IMR-90 (cell line): ENCODE measurements at regions of chr2 and their contacts with region 1.

Region 1: GRCh38 chr2:237256887-237257286 is 157.1 kb downstream of the COL6A3 start:
- DNase-seq: peak; percentile 86
- ATAC-seq: peak; percentile 48
- H3K4me3 ChIP-seq: no peak overlapping the region
- H3K27ac ChIP-seq: peak overlapping the region; percentile 95
- H3K4me1 ChIP-seq: peaks cover 43% of the 10 kb centered on the region
- H3K27me3 ChIP-seq: no peaks in the 10 kb centered on the region
- CTCF ChIP-seq: no peak
- POLR2A ChIP-seq: 0 out of 2 replicates have a peak, but pooled peaks have one; percentile 21
- RAD21 ChIP-seq: no peak

Region 2: DNA sequence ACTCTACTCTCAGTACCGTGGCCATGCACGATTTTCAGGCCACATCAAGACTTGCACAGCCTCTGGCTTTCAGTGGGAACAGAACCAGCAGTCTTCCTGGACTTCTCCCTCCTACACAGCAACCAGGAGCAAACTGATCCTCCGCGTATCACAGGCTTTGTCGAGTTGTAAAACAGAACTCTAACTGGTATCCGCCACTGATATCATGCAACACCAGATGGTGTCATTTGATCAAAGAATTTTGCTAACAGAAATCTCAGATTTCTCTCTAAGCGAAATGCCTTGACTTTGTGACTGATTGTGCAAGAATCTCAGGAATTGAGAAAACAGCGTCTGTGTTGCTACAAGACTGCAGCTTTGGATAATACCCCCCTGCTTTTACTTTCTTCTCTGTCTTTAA is 85.5 kb before region 1 on chr2:
- CTCF ChIA-PET with region 1: no interaction called
- POLR2A ChIA-PET with region 1: interaction called, 6 read pairs
- dilution Hi-C with region 1: no loop called
- in situ Hi-C with region 1: no loop called
- intact Hi-C with region 1: loop called (anchors 2 kb)
- DNase-seq: peak; percentile 97
- ATAC-seq: peak; percentile 92
- H3K4me3 ChIP-seq: peak overlapping the region; percentile 21; the same call in 1 of the 2 replicates
- H3K27ac ChIP-seq: peak overlapping the region; percentile 97
- H3K4me1 ChIP-seq: peaks cover 11% of the 10 kb centered on the region
- H3K27me3 ChIP-seq: no peaks in the 10 kb centered on the region
- CTCF ChIP-seq: peak; percentile 56
- POLR2A ChIP-seq: peak; percentile 42; the same call in 1 of the 2 replicates
- RAD21 ChIP-seq: peak; percentile 80

Region 3: GRCh38 chr2:237181844-237182243 is 75.0 kb before region 1 on chr2:
- CTCF ChIA-PET with region 1: interaction called, 4 read pairs
- POLR2A ChIA-PET with region 1: interaction called, 3 read pairs
- dilution Hi-C with region 1: no loop called
- in situ Hi-C with region 1: no loop called
- intact Hi-C with region 1: loop called (anchors 2 kb)
- DNase-seq: peak; percentile 100
- ATAC-seq: peak; percentile 43
- H3K4me3 ChIP-seq: no peak overlapping the region
- H3K27ac ChIP-seq: peak overlapping the region; percentile 93
- H3K4me1 ChIP-seq: peaks cover 42% of the 10 kb centered on the region
- H3K27me3 ChIP-seq: no peaks in the 10 kb centered on the region
- CTCF ChIP-seq: no peak
- POLR2A ChIP-seq: no peak
- RAD21 ChIP-seq: no peak; the same call in 1 of the 2 replicates

Region 4: GRCh38 chr2:237207646-237208045 is 49.2 kb before region 1 on chr2:
- CTCF ChIA-PET with region 1: no interaction called
- POLR2A ChIA-PET with region 1: no interaction called
- dilution Hi-C with region 1: no loop called
- in situ Hi-C with region 1: no loop called
- intact Hi-C with region 1: no loop called
- DNase-seq: peak; percentile 85
- ATAC-seq: peak; percentile 37
- H3K4me3 ChIP-seq: no peak overlapping the region
- H3K27ac ChIP-seq: peak overlapping the region; percentile 96
- H3K4me1 ChIP-seq: peaks cover 31% of the 10 kb centered on the region
- H3K27me3 ChIP-seq: no peaks in the 10 kb centered on the region
- CTCF ChIP-seq: no peak
- POLR2A ChIP-seq: no peak
- RAD21 ChIP-seq: no peak

Region 5: DNA sequence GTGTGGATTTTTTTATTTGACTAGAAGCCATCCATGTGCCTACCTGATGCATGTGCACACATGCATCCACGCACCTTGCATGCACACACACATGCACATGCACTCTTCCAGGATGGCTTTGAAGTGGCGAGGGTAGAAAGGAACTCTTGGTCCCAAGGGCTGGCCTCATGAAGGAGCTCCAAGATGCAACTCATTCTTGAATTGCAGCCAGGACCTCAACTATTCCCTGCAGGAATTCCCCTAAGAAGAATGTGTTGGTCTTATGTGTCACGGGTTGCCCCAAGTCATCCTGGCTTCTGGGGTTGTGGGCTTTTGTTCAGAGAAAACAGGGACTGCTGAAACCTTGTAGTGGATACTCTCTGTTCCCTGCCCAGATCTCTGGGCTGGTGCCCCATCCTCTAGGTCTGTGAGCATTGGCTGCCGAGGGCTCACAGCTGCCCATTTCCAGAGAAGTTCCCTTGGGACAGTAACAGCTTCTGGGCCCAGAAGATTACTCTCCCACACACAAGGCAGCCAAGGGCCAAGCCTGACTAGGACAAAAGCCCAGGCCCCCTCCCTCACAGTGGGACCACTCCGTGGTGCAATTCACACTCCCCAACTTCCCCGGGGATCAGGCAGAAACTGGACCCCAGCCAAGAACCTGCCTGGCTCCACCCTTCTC is 33.6 kb before region 1 on chr2:
- CTCF ChIA-PET with region 1: interaction called, 3 read pairs
- POLR2A ChIA-PET with region 1: interaction called, 9 read pairs
- dilution Hi-C with region 1: no loop called
- in situ Hi-C with region 1: no loop called
- intact Hi-C with region 1: loop called (anchors 2 kb)
- DNase-seq: peak; percentile 100
- ATAC-seq: peak; percentile 64
- H3K4me3 ChIP-seq: no peak overlapping the region
- H3K27ac ChIP-seq: peak overlapping the region; percentile 99
- H3K4me1 ChIP-seq: peaks cover 30% of the 10 kb centered on the region
- H3K27me3 ChIP-seq: no peaks in the 10 kb centered on the region
- CTCF ChIP-seq: no peak
- POLR2A ChIP-seq: peak; percentile 58; the same call in 1 of the 2 replicates
- RAD21 ChIP-seq: peak; percentile 42

Region 6: GRCh38 chr2:237291138-237291792 is 34.4 kb after region 1 on chr2:
- CTCF ChIA-PET with region 1: no interaction called
- POLR2A ChIA-PET with region 1: no interaction called
- dilution Hi-C with region 1: no loop called
- in situ Hi-C with region 1: no loop called
- intact Hi-C with region 1: loop called (anchors 5 kb)
- DNase-seq: peak; percentile 98
- ATAC-seq: peak; percentile 86
- H3K4me3 ChIP-seq: no peak overlapping the region
- H3K27ac ChIP-seq: peak overlapping the region; percentile 96
- H3K4me1 ChIP-seq: peaks cover 15% of the 10 kb centered on the region
- H3K27me3 ChIP-seq: no peaks in the 10 kb centered on the region
- CTCF ChIP-seq: no peak
- POLR2A ChIP-seq: peak; percentile 61
- RAD21 ChIP-seq: peak; percentile 32

Region 7: DNA sequence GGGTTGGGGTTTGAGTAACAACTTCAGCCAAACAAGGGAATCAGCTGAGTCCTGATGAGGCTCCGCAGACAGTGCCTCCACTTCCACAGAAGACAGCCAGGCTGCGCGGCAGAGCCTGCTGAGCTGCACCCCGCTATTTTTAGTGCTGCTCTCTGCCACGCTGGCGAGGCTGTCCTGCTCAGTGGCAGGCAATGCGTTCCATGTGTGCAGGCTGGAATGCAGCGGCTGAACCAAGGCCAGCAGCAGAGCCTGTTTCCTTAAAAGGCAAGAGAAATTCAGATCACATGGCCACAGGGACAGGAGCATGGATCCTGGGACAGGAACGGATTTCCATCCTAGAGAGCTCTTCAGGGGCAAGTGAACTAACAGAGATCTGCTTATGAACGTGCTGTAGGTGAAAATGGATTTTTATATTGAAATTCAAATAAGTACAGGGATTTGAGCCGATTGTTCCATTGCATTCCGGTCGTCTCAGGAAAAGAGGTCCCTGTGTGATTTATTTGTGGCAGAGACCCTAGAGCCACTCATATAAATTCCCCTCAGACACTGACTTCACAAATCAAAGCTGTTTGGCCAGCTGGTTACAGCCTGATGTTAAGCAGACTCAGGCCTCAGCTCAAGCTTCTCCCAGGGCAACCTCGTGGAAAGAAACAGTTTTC is 58.4 kb after region 1 on chr2:
- CTCF ChIA-PET with region 1: no interaction called
- POLR2A ChIA-PET with region 1: interaction called, 6 read pairs
- dilution Hi-C with region 1: no loop called
- in situ Hi-C with region 1: no loop called
- intact Hi-C with region 1: loop called (anchors 2 kb)
- DNase-seq: peak; percentile 98
- ATAC-seq: peak; percentile 69
- H3K4me3 ChIP-seq: no peak overlapping the region
- H3K27ac ChIP-seq: peak overlapping the region; percentile 95
- H3K4me1 ChIP-seq: peaks cover 26% of the 10 kb centered on the region
- H3K27me3 ChIP-seq: no peaks in the 10 kb centered on the region
- CTCF ChIP-seq: peak; percentile 45
- POLR2A ChIP-seq: 0 out of 2 replicates have a peak, but pooled peaks have one; percentile 23
- RAD21 ChIP-seq: peak; percentile 56